CD4-positive, alpha-beta memory T cell (primary cell): ENCODE measurements at regions of chr4 and their contacts with region 1.

Region 1: DNA sequence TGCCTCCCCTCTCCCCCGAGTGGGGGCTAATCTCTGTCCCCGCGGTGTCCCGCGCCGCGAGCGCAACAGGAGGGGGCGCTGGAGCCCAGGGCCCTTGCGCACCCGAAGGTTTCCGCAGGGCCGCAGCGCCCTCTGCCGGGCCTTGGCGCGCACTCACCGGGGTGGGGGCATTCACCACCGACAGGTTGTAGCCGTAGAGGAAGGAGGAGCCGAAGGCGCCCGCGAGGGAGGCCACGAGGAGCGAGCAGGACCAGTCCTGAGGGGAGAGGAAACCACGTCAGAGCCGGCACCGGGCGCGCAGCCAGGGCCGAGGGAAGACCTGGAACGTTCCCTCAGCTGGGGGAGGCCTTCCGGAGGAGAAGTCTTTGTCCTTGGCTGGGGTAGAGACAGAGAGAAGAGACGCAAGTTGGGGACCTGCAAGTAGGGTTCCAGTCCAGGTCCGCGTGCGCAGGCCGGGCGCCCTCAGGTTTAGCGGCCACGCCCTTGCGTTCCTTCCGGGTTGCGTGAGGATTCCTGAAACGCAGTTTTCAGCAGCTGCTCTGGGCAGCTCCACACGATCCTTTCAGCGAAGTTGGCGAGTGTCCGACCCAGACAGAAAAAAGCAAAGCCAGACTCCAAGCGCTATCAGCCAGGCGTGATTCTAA is 2.4 kb downstream of the SLC2A9 start:
- DNase-seq: peak; percentile 91 to 96 (median 94)
- H3K4me3 ChIP-seq: peak overlapping the region; percentile 46 to 66
- H3K4me3 Mint-ChIP-seq: peak overlapping the region; percentile 87 to 94 (median 91)
- H3K27ac ChIP-seq: peak overlapping the region; percentile 54
- H3K27ac Mint-ChIP-seq: peak overlapping the region; percentile 93 to 98 (median 97)
- H3K4me1 ChIP-seq: peaks cover 14% of the 10 kb centered on the region
- H3K4me1 Mint-ChIP-seq: peaks cover 3 to 18% (median 11%) of the 10 kb centered on the region in 4 donors
- H3K27me3 ChIP-seq: no peaks in the 10 kb centered on the region
- H3K27me3 Mint-ChIP-seq: peaks cover 0 to 3% of the 10 kb centered on the region in 2 donors

Region 2: GRCh38 chr4:9146967-9147366 is 872.0 kb before region 1 on chr4:
- CTCF ChIA-PET with region 1: no interaction called
- POLR2A ChIA-PET with region 1: no interaction called
- intact Hi-C with region 1: loop called (anchors 10 kb)
- DNase-seq: no peak
- H3K4me3 ChIP-seq: no peak overlapping the region
- H3K4me3 Mint-ChIP-seq: no peak overlapping the region
- H3K27ac ChIP-seq: no peak overlapping the region
- H3K27ac Mint-ChIP-seq: no peak overlapping the region
- H3K4me1 ChIP-seq: no peaks in the 10 kb centered on the region
- H3K4me1 Mint-ChIP-seq: peaks cover 3 to 5% (median 4%) of the 10 kb centered on the region in 4 donors
- H3K27me3 ChIP-seq: no peaks in the 10 kb centered on the region
- H3K27me3 Mint-ChIP-seq: no peaks in the 10 kb centered on the region

Region 3: GRCh38 chr4:9762823-9763475 is 256.0 kb before region 1 on chr4:
- CTCF ChIA-PET with region 1: interaction called, 3 read pairs
- POLR2A ChIA-PET with region 1: no interaction called
- intact Hi-C with region 1: loop called (anchors 2 kb)
- DNase-seq: peak in 4 of 5 donors; percentile 6 to 31 (median 16)
- H3K4me3 ChIP-seq: no peak overlapping the region
- H3K4me3 Mint-ChIP-seq: no peak overlapping the region
- H3K27ac ChIP-seq: no peak overlapping the region
- H3K27ac Mint-ChIP-seq: no peak overlapping the region
- H3K4me1 ChIP-seq: no peaks in the 10 kb centered on the region
- H3K4me1 Mint-ChIP-seq: no peaks in the 10 kb centered on the region
- H3K27me3 ChIP-seq: no peaks in the 10 kb centered on the region
- H3K27me3 Mint-ChIP-seq: peaks cover 2 to 9% of the 10 kb centered on the region in 2 donors

Region 4: GRCh38 chr4:9845791-9846493 is 173.0 kb before region 1 on chr4:
- CTCF ChIA-PET with region 1: no interaction called
- POLR2A ChIA-PET with region 1: no interaction called
- intact Hi-C with region 1: no loop called
- DNase-seq: no peak
- H3K4me3 ChIP-seq: no peak overlapping the region
- H3K4me3 Mint-ChIP-seq: no peak overlapping the region
- H3K27ac ChIP-seq: no peak overlapping the region
- H3K27ac Mint-ChIP-seq: no peak overlapping the region
- H3K4me1 ChIP-seq: no peaks in the 10 kb centered on the region
- H3K4me1 Mint-ChIP-seq: no peaks in the 10 kb centered on the region
- H3K27me3 ChIP-seq: no peaks in the 10 kb centered on the region
- H3K27me3 Mint-ChIP-seq: peaks cover 4 to 5% of the 10 kb centered on the region in 2 donors

Region 5: DNA sequence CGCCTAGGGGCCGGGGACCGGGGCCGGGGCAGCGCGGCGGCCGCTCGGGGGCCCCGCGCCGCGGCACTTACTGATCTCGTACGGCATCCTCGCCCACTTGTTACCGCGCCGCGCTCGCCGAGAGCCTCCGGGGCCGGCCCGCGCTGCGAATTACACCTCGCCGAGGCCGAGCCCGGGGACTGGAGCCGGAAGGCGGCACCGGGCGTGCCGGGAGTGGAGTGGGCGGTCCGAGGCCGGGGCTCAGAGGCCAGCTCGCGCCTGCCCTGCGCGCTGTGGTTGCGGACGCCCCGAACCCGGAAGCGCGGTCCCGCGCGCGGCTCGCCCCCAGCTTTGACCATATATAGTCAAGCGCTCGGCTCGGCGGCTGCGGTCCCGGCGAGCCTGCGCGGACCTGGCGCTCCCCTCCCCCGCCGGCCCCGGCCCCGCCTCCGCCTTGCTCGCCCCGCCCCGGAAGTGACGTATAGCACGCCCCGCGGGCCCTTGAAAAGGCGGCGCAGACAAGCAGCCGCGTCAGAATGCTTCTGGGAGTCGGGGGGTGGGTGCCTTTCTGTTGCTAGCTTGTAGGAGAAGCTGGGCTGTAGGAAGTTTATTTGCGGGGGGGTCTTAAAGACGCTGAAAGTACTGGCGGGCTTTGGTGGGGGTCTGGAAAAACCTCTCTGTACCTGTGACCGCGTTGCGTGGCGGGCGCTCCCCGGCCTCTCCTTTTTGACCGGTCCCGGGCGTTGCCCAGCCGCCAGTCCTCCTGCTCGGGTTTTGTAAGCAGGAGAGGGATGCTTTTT is 97.8 kb after region 1 on chr4 and contains the start of gene WDR1:
- CTCF ChIA-PET with region 1: interaction called, 6 read pairs
- POLR2A ChIA-PET with region 1: interaction called, 24 read pairs
- intact Hi-C with region 1: loop called (anchors 1 kb)
- DNase-seq: peak; percentile 86 to 91 (median 89)
- H3K4me3 ChIP-seq: peak within 1 kb of the TSS; percentile 50 to 92
- H3K4me3 Mint-ChIP-seq: peak within 1 kb of the TSS; percentile 95 to 98 (median 97)
- H3K27ac ChIP-seq: peak within 1 kb of the TSS; percentile 90
- H3K27ac Mint-ChIP-seq: peak within 1 kb of the TSS; percentile 96 to 99 (median 98)
- H3K4me1 ChIP-seq: peaks cover 61% of the 10 kb centered on the region
- H3K4me1 Mint-ChIP-seq: peaks cover 46 to 73% (median 60%) of the 10 kb centered on the region in 4 donors
- H3K27me3 ChIP-seq: no peaks in the 10 kb centered on the region
- H3K27me3 Mint-ChIP-seq: no peaks in the 10 kb centered on the region
- total RNA-seq, gene WDR1: 295 to 298 TPM

Region 6: DNA sequence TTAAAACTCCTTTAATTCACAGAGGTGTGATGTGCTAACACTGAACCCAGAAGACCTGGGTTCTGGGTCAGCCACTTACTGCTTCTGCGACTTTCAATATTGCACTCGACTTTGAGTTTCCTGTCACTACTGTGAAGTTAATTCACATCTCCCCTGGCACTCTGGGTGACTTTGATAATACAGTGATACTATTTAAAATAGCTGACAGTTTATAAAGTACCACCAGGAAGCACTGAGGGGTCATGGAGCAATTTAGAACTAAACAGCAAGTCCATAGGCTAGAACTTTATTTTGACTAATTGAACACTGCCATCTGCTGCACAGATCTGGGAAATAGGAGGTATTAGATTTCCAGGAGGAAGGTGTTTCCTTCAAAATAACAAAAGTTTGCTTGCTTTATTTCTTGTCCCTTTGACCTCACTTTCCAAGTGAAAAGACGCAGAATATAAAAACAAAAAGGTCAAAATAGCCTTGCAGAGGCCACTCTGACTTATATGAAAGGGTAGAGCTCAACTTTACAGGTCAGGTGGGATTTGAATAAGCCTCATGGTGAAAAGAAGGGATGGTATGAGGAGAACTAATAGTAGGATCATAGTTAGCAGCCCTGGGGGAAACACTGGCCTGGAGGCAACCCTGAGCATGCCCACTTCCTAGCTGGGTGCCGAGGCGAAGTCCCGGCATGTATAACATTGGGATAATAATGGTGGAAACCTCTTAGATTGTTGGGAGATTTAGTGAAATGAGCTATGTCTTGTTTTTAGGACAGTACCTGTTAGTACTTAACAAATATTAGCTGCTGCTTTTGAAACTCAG is 384.9 kb after region 1 on chr4:
- CTCF ChIA-PET with region 1: no interaction called
- POLR2A ChIA-PET with region 1: no interaction called
- intact Hi-C with region 1: loop called (anchors 1 kb)
- DNase-seq: peak in 3 of 5 donors; percentile 9 to 23 (median 21)
- H3K4me3 ChIP-seq: no peak overlapping the region
- H3K4me3 Mint-ChIP-seq: no peak overlapping the region
- H3K27ac ChIP-seq: no peak overlapping the region
- H3K27ac Mint-ChIP-seq: peak overlapping the region in 1 of 7 donors; percentile 32
- H3K4me1 ChIP-seq: no peaks in the 10 kb centered on the region
- H3K4me1 Mint-ChIP-seq: no peaks in the 10 kb centered on the region
- H3K27me3 ChIP-seq: no peaks in the 10 kb centered on the region
- H3K27me3 Mint-ChIP-seq: no peaks in the 10 kb centered on the region

Region 7: DNA sequence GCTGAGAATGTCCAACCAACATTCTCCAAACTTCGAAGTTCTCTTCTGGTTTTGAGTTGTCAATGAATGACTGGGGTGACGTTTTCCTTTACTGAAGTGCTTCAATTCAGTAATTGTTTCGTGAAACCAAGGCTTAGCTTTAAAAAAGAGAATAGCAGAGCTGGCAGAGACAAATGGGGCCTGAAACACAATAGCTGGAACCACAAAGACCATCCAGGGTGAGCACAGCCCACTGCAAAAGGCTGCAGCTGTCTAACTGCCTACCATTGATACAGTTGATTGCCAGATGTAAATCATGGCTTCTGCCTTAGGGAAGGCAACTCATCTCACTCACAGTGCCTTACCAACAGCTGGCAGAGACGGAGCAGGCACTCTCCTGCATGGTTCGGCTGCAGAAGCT is 517.0 kb after region 1 on chr4:
- CTCF ChIA-PET with region 1: interaction called, 4 read pairs
- POLR2A ChIA-PET with region 1: no interaction called
- intact Hi-C with region 1: loop called (anchors 1 kb)
- DNase-seq: no peak
- H3K4me3 ChIP-seq: no peak overlapping the region
- H3K4me3 Mint-ChIP-seq: no peak overlapping the region
- H3K27ac ChIP-seq: no peak overlapping the region
- H3K27ac Mint-ChIP-seq: no peak overlapping the region
- H3K4me1 ChIP-seq: no peaks in the 10 kb centered on the region
- H3K4me1 Mint-ChIP-seq: no peaks in the 10 kb centered on the region
- H3K27me3 ChIP-seq: no peaks in the 10 kb centered on the region
- H3K27me3 Mint-ChIP-seq: peaks cover 2 to 3% of the 10 kb centered on the region in 2 donors